GM12878 (cell line): ENCODE measurements at regions of chr2 and their contacts with region 1.

Region 1: GRCh38 chr2:101012706-101013181 is 10.7 kb downstream of the RPL31 start:
- DNase-seq: no peak
- ATAC-seq: no peak
- H3K4me3 ChIP-seq: no peak overlapping the region
- H3K27ac ChIP-seq: peak overlapping the region; percentile 83
- H3K4me1 ChIP-seq: peaks cover 17% of the 10 kb centered on the region
- H3K27me3 ChIP-seq: no peaks in the 10 kb centered on the region
- CTCF ChIP-seq: peak; percentile 60 to 72 (median 71)
- EP300 ChIP-seq: no peak
- POLR2A ChIP-seq: no peak
- RAD21 ChIP-seq: peak; percentile 83

Region 2: GRCh38 chr2:101036562-101037457 is 24.1 kb after region 1 on chr2:
- CTCF ChIA-PET with region 1: interaction called, 15 read pairs
- POLR2A ChIA-PET with region 1: interaction called, 3 read pairs
- RAD21 ChIA-PET with region 1: interaction called, 5 read pairs
- SMC1A ChIA-PET with region 1: interaction called, 8 read pairs
- in situ Hi-C with region 1: no loop called
- intact Hi-C with region 1: no loop called
- DNase-seq: no peak
- ATAC-seq: peak; percentile 65
- H3K4me3 ChIP-seq: no peak overlapping the region
- H3K27ac ChIP-seq: no peak overlapping the region
- H3K4me1 ChIP-seq: no peaks in the 10 kb centered on the region; the same call in 1 of the 2 replicates
- H3K27me3 ChIP-seq: no peaks in the 10 kb centered on the region
- CTCF ChIP-seq: peak; percentile 32 to 61 (median 56); a peak in 5 of 6 replicates
- EP300 ChIP-seq: no peak
- POLR2A ChIP-seq: no peak
- RAD21 ChIP-seq: peak; percentile 81

Region 3: GRCh38 chr2:101151141-101151858 is 138.6 kb after region 1 on chr2 and contains the start of gene TBC1D8:
- CTCF ChIA-PET with region 1: interaction called, 15 read pairs
- POLR2A ChIA-PET with region 1: no interaction called
- RAD21 ChIA-PET with region 1: interaction called, 17 read pairs
- SMC1A ChIA-PET with region 1: interaction called, 21 read pairs
- in situ Hi-C with region 1: no loop called
- intact Hi-C with region 1: loop called (anchors 1 kb)
- DNase-seq: no peak
- ATAC-seq: peak; percentile 84
- H3K4me3 ChIP-seq: peak within 1 kb of the TSS; percentile 61
- H3K27ac ChIP-seq: no peak within 1 kb of the TSS
- H3K4me1 ChIP-seq: peaks cover 10% of the 10 kb centered on the region
- H3K27me3 ChIP-seq: peaks cover 0 to 3% of the 10 kb centered on the region in 2 experiments; a peak in 2 of 4 replicates
- CTCF ChIP-seq: no peak
- EP300 ChIP-seq: no peak
- POLR2A ChIP-seq: peak; percentile 73
- RAD21 ChIP-seq: no peak
- polyA plus RNA-seq, gene TBC1D8: 0.80 to 1.5 TPM

Region 4: GRCh38 chr2:101252408-101253012 is 239.8 kb after region 1 on chr2 and contains the start of gene CNOT11:
- CTCF ChIA-PET with region 1: interaction called, 10 read pairs
- POLR2A ChIA-PET with region 1: interaction called, 4 read pairs
- RAD21 ChIA-PET with region 1: no interaction called
- SMC1A ChIA-PET with region 1: no interaction called
- in situ Hi-C with region 1: no loop called
- intact Hi-C with region 1: loop called (anchors 5 kb)
- DNase-seq: peak; percentile 93
- ATAC-seq: peak; percentile 92
- H3K4me3 ChIP-seq: peak within 1 kb of the TSS; percentile 81
- H3K27ac ChIP-seq: peak within 1 kb of the TSS; percentile 92
- H3K4me1 ChIP-seq: peaks cover 7% of the 10 kb centered on the region
- H3K27me3 ChIP-seq: no peaks in the 10 kb centered on the region
- CTCF ChIP-seq: no peak
- EP300 ChIP-seq: no peak
- POLR2A ChIP-seq: peak; percentile 85
- RAD21 ChIP-seq: no peak
- polyA plus RNA-seq, gene CNOT11: 10.8 to 15.7 TPM